ENCODE measurements at regions of chr11 and their contacts with region 1.

Region 1: DNA sequence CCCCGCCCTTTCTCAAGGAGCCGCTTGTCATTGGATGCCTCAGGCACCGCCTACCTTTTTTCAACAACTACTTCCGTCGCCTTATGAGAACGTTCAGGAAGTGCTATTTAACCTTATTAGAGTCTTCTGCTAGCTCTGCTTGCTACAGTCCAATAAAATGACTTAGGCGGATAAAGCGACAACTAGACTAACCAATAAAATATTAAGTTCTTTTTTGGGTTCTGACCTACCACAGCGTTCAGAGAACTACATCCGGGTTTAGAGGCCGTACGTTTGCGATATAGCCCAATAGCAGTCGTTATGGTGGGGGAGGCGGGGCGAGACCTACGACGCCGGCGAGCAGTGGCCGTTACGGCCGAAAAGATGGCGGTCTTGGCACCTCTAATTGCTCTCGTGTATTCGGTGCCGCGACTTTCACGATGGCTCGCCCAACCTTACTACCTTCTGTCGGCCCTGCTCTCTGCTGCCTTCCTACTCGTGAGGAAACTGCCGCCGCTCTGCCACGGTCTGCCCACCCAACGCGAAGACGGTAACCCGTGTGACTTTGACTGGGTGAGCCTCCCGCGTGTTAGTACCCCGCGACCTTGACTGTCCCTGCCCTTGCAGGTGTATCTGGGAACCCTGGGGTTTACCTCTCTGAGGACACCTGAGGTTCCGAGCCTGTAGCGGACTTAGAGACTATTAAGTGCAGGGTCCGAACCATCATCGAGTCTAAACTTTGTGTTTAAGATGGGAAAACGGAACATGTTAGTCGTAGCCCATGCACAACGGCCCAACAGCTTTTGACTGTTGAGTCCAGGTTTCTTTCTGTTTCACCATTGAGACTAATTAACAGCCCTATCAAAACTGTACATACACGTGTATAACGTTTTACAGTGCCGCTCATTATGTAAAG is at the start of gene TMX2:
- DNase-seq: peak; percentile 88 to 99 (median 91)

Region 2: DNA sequence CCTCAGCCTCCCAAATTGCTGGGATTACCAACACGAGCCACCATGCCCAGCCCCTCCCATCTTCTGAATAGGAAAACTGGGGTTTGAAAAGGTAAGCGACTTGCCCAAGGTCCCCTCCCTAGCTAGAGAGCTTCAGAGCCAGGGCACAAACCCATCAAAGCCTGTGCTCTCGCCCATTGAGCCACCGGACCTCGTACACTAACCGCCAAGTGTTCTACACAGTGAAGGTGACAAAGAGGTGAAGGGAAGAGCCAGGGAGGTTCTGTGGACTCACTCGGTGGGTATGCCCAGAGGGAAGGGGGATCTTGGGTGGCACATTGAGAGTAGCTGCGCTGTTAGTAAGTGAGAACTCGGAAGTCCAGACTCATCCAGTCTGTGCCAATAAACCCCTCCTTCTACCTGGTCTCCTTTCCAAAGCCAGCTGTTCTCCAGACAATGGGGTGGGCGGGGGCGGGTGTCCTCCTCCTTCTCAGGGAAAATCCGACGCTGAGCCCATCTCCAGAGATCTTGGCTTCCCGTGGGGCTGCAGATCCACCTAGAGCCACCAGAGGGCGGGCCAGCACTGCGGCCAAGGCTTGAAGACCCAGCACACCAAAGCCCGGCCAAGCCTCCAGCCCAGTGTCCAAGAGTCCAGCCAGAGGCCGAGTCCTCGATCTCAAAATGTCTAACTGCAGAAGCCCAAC is 255.4 kb before region 1 on chr11:
- intact Hi-C with region 1: no loop called
- DNase-seq: peak; percentile 78 to 98 (median 90)

Region 3: GRCh38 chr11:57667736-57668435 is 44.6 kb before region 1 on chr11 and contains the start of gene ZDHHC5:
- intact Hi-C with region 1: loop called (anchors 2 kb)
- DNase-seq: peak; percentile 98 to 100 (median 100)

Region 4: DNA sequence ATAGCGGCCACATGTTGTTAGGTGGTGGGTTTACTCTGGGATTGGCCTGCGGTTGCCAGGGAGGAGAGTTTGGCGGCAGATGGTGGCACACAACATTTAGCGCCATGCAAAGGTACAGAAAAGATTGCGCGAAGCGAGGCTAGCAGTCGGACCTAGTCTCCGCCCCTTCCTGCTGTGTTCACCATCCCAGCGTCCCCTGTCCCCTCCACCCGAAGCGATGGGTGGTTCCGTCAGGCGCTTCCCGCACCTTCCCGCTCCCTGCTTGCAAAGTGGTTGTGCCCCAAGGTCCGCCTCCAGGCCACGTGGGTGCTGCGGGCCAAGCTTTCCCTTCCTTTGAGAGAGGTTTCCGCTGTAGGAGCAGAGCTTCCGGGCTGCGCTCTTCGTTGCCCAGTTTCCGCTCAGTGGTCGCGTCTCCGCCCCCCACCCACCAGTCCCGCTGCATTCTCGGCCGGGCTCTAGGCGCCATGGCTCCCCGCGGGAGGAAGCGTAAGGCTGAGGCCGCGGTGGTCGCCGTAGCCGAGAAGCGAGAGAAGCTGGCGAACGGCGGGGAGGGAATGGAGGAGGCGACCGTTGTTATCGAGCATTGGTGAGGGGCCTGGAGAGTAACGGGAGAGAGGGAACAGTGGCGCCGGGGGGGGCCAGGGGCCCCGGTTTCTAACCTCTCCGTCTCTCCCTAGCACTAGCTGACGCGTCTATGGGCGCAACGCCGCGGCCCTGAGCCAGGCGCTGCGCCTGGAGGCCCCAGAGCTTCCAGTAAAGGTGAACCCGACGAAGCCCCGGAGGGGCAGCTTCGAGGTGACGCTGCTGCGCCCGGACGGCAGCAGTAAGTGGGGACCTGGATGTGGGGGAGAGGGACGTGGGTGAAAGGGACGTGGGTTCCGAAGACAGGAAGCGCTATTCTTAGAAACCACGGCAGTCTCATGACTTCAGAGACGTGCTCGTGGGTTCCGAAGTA is 28.9 kb after region 1 on chr11 and contains the start of gene SELENOH:
- intact Hi-C with region 1: loop called (anchors 2 kb)
- DNase-seq: peak; percentile 89 to 100 (median 97)

Region 5: DNA sequence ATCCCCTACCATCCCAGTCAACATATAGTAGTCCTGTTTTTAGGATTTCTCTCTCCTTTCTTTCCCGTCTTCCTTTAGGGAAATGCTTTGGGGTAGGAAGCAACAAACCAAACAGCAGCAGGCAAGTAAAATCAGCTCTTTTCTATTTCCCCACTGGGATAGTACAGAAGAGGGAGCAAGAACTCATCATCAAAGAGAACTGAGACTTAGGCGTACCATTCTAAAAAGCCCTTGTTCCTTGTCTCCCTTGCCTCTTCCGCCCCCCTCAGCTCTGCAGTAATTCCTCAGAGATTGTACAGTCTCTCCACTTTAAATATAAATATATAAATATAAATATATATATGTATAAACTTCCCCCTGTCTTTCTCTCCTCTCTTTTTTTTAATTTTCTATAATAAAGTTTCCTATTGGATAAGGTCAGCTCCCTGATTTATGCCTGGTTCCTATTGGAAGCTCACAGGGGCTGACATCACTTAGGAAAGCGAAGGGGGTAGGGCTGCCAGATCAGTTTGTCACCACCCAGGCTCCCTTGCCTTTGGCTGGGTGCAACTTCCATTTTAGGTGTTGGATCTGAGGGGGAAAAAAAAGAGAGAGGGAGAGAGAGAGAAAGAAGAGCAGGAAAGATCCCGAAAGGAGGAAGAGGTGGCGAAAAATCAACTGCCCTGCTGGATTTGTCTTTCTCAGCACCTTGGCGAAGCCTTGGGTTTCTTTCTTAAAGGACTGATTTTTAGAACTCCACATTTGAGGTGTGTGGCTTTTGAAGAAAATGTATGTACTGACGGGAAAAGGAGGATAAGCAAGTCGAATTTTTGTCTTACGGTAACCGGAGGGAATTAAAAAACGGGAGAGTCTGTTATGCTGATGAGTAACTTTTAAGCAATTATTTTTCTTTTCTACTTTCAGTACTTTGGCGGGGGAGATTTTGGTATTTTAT is 49.1 kb after region 1 on chr11 and contains the start of gene CTNND1:
- intact Hi-C with region 1: loop called (anchors 5 kb)
- DNase-seq: peak; percentile 62 to 96 (median 77)

Region 6: GRCh38 chr11:57800444-57801182 is 88.1 kb after region 1 on chr11:
- intact Hi-C with region 1: loop called (anchors 2 kb)
- DNase-seq: peak in 1 of 10 donors; percentile 61